ENCODE measurements at regions of chr9 and their contacts with region 1.

Region 1: GRCh38 chr9:100011062-100011681 is 87.6 kb downstream of the ERP44 start:
- DNase-seq: peak; percentile 68

Region 2: GRCh38 chr9:99184475-99185347 is 826.5 kb before region 1 on chr9:
- in situ Hi-C with region 1: loop called (anchors 25 kb)
- DNase-seq: peak; percentile 86

Region 3: GRCh38 chr9:100309992-100310391 is 298.8 kb after region 1 on chr9:
- in situ Hi-C with region 1: no loop called
- DNase-seq: no peak

Measured in KBM-7 (cell line).